ENCODE measurements at regions of chrX and their contacts with region 1.

Region 1: DNA sequence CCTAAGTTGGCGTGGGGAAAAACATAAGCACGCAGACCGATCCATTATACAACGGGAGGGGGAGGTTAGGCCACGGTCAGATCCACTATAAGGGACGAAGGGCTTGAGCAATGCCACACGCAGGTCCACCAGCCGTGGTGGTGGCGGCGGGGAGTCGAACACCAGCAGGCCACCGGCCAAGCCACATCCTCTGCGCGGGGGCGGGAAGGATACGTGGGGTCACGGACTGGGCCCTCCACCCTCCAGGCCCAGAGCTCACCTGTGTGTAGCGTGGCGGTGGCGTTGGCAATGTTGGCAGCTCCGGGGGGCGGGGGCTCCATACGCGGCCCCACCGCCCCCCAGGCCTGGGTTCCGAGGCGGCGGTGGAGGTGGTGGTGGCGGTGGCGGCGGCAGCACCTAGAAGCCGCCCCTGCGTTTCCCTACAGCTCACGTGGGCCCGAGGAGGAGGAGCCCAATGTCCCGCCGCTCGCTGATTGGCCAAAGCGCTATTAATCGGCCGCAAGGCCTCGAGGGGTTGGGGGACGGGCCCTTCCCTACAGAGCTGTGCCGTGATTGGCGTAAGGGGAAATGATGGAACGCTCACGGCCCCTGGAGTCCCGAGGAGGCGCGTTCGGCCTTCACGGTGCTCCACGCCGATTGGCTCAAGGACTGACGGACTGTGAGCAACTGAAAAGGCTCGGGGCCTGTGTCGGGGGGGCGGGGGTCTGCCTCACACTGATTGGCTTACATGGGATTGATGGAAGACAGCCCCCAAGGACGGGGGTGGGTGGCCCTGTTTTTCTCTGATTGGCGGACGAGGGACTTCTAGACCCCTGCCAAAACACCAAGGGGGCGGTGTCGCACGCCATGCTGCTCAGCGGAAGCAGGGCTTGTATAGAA is at the start of gene ELK1:
- DNase-seq: peak; percentile 96
- H3K4me3 Mint-ChIP-seq: peak within 1 kb of the TSS; percentile 93
- H3K27ac Mint-ChIP-seq: peak within 1 kb of the TSS; percentile 94
- H3K4me1 Mint-ChIP-seq: peaks cover 49% of the 10 kb centered on the region
- H3K27me3 Mint-ChIP-seq: no peaks in the 10 kb centered on the region
- total RNA-seq, gene ELK1: 104 and 112 TPM in 2 replicates

Region 2: DNA sequence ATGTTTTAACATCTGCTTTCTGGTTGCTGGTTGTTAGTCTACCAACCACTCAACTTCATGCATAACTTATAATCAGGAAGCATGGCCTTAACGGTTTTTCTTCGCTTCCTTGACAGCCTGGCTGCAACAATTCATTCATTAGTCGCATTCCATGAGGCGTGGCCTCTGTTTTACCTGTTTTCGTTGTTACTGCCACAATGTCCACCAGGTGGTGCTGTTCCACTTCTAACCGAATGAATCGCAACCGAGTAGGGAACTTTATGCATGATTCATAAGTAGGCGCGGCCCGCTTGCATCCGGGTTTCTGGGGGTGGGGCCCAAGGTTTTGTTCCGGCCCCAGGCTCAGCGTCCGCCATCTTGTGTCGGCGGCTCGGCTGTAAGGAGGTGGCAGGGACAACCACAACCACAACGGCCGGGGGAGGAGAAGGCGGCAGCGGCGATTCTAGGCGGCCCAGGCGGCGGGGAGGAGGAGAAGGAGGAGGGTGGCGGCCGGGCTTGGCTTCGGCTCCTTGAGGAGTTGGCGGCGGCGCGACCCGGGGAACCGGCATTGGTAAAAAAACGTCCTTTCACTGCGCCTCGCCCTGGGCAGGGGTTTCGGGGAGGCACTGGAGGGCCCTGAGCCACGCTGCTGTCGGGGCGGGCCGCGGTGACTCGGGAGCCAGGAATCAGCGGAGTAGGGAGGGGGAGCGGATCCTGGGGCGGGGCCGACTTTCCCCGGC is 456.8 kb before region 1 on chrX and contains the start of gene UBA1:
- intact Hi-C with region 1: loop called (anchors 10 kb)
- DNase-seq: peak; percentile 97
- H3K4me3 Mint-ChIP-seq: peak within 1 kb of the TSS; percentile 94
- H3K27ac Mint-ChIP-seq: peak within 1 kb of the TSS; percentile 98
- H3K4me1 Mint-ChIP-seq: peaks cover 35% of the 10 kb centered on the region
- H3K27me3 Mint-ChIP-seq: no peaks in the 10 kb centered on the region
- total RNA-seq, gene UBA1: 233 and 246 TPM in 2 replicates

Region 3: GRCh38 chrX:47233337-47234113 is 416.9 kb before region 1 on chrX:
- intact Hi-C with region 1: loop called (anchors 1 kb)
- DNase-seq: peak; percentile 97
- H3K4me3 Mint-ChIP-seq: peak overlapping the region; percentile 87
- H3K27ac Mint-ChIP-seq: peak overlapping the region; percentile 98
- H3K4me1 Mint-ChIP-seq: peaks cover 20% of the 10 kb centered on the region
- H3K27me3 Mint-ChIP-seq: peaks cover 3% of the 10 kb centered on the region

Region 4: GRCh38 chrX:47560831-47561652 is 89.4 kb before region 1 on chrX and contains the start of gene ARAF:
- intact Hi-C with region 1: loop called (anchors 2 kb)
- DNase-seq: peak; percentile 98
- H3K4me3 Mint-ChIP-seq: peak within 1 kb of the TSS; percentile 95
- H3K27ac Mint-ChIP-seq: peak within 1 kb of the TSS; percentile 97
- H3K4me1 Mint-ChIP-seq: peaks cover 28% of the 10 kb centered on the region
- H3K27me3 Mint-ChIP-seq: no peaks in the 10 kb centered on the region
- total RNA-seq, gene ARAF: 77.3 and 78.9 TPM in 2 replicates

Region 5: DNA sequence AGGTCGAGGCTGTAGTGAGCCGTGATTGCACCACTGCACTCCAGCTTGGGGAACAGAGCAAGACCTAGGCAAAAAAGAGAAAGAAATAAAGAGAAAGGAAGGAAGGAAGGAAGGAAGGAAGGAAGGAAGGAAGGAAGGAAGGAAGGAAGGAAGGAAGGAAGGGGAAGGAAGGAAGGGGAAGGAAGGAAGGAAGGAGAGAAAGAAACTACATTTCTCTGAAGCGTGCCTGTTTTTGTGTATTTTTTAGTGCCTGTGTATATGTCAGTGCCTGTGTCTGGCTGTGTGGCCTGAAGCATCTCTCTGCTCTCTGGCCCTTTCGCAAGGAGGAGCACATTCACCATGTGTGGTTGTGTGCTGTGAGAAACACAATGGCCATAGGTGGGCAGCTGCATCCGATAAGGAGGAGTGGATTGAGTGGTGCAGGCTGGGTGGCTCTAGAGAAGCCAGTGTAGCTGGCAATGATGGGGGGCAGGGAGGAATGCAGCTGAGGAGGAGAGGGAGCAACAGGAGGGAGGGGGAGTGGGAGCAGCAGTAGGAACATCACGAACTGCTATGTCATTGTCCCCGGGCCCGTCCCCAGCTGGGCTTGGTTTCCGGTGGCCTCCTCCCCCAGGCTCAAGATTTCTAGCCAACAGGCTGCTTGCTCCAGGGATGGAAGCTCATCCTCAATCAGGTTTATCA is 42.1 kb before region 1 on chrX:
- intact Hi-C with region 1: no loop called
- DNase-seq: no peak
- H3K4me3 Mint-ChIP-seq: no peak overlapping the region
- H3K27ac Mint-ChIP-seq: no peak overlapping the region
- H3K4me1 Mint-ChIP-seq: peaks cover 4% of the 10 kb centered on the region
- H3K27me3 Mint-ChIP-seq: no peaks in the 10 kb centered on the region

Region 6: DNA sequence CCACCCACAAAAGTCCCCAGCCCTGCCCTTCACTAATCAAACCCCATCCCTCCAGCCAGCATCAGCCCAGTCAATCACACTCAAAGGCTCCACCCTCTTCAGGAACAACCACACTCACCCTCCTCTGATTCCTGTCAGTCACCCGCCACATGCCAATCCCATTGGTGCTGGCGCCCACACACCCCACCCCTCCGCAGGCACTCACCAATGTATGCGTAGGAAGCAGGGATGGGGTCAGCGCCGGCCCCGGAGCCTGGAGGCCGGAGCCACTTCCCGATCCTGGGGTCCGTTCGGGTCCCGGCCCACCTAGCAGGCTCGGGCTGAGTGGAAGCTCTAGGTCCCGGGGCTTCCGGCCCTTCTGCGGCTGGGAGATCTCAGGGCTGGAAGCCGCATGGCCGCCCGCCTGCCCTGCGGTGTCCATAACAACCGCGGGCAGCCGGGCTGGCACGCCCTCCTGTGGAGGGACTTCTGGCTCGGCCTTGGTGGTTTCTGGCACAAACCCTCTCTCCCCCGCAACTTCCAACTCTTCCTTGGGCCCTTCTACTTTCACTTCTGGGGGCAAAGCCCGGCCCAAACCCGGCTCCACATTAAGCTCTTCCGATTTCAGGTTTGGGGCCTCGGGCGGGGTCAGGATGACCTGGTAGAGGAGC is 12.7 kb before region 1 on chrX:
- intact Hi-C with region 1: loop called (anchors 2 kb)
- DNase-seq: peak; percentile 76
- H3K4me3 Mint-ChIP-seq: peak overlapping the region; percentile 66
- H3K27ac Mint-ChIP-seq: peak overlapping the region; percentile 17
- H3K4me1 Mint-ChIP-seq: peaks cover 21% of the 10 kb centered on the region
- H3K27me3 Mint-ChIP-seq: no peaks in the 10 kb centered on the region

Region 7: GRCh38 chrX:48165246-48165645 is 514.8 kb after region 1 on chrX:
- intact Hi-C with region 1: no loop called
- DNase-seq: no peak
- H3K4me3 Mint-ChIP-seq: no peak overlapping the region
- H3K27ac Mint-ChIP-seq: no peak overlapping the region
- H3K4me1 Mint-ChIP-seq: no peaks in the 10 kb centered on the region
- H3K27me3 Mint-ChIP-seq: peaks cover 3% of the 10 kb centered on the region

Region 8: GRCh38 chrX:48475774-48476577 is 825.6 kb after region 1 on chrX and contains the start of gene FTSJ1:
- intact Hi-C with region 1: loop called (anchors 5 kb)
- DNase-seq: peak; percentile 96
- H3K4me3 Mint-ChIP-seq: peak within 1 kb of the TSS; percentile 96
- H3K27ac Mint-ChIP-seq: peak within 1 kb of the TSS; percentile 93
- H3K4me1 Mint-ChIP-seq: peaks cover 28% of the 10 kb centered on the region
- H3K27me3 Mint-ChIP-seq: no peaks in the 10 kb centered on the region
- total RNA-seq, gene FTSJ1: 95.6 and 101 TPM in 2 replicates

Measured in activated CD4-positive, alpha-beta T cell treated with anti-CD3 and anti-CD28 coated beads, Interleukin-2, amount 10 ng/mL, durations not matched to agents 24 days and 14 days (primary cell).